HAP-1 (cell line): ENCODE measurements at regions of chr14 and their contacts with region 1.

Region 1: GRCh38 chr14:94136575-94137331 is 7.3 kb upstream of the IFI27L2 start:
- DNase-seq: peak; percentile 85 to 92
- H3K4me3 ChIP-seq: no peak overlapping the region
- H3K4me1 ChIP-seq: peaks cover 3% of the 10 kb centered on the region; the same call in 1 of the 2 replicates
- H3K27me3 ChIP-seq: no peaks in the 10 kb centered on the region

Region 2: DNA sequence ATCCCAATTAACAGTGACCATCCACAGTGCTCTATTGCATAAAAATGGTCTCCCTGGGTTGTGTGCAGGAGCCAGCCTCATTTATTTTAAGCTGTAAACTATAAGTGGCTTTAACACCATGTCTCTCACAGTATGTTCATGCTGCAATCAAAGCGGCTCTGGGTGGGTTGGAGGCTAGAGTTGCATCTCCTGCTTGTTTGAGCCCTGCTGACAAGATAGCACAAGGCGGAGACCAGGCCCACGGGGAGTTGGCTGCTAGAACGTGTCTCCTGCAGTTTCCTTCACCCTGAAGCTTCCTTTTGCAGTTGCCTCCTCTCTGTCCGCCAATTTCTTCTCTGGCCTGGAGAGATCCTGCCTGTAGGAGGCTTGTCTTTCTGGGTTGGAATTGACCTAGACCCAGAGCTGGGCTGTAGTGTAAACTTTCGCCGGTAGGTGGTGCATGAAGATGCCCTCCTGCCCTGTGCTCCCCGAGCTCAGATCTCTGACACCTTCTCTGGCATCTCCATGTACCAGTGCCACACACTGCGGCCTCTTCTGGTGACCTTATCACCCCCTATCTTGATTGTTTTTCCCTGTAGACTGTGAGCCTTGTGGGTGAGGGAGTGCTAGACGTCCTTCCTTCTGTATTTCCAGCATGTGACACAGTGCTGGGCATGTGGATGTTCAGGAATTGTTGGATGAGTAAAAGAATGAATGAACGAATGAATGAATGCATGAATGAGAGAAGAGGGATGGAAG is 100.3 kb before region 1 on chr14:
- in situ Hi-C with region 1: loop called (anchors 5 kb)
- DNase-seq: peak; percentile 54 to 88
- H3K4me3 ChIP-seq: no peak overlapping the region
- H3K4me1 ChIP-seq: no peaks in the 10 kb centered on the region
- H3K27me3 ChIP-seq: no peaks in the 10 kb centered on the region